IMR-90 (cell line): ENCODE measurements at regions of chr1 and their contacts with region 1.

Region 1: GRCh38 chr1:113904674-113905434 is at the starts of genes AP4B1 and DCLRE1B:
- DNase-seq: peak; percentile 100
- ATAC-seq: peak; percentile 95
- H3K4me3 ChIP-seq: peak within 1 kb of the TSS; percentile 58
- H3K27ac ChIP-seq: peak within 1 kb of the TSS; percentile 83
- H3K4me1 ChIP-seq: no peaks in the 10 kb centered on the region
- H3K27me3 ChIP-seq: no peaks in the 10 kb centered on the region
- CTCF ChIP-seq: peak; percentile 87
- POLR2A ChIP-seq: peak; percentile 86
- RAD21 ChIP-seq: peak; percentile 84
- total RNA-seq, gene AP4B1: 16.7 and 18.1 TPM in 2 replicates
- total RNA-seq, gene DCLRE1B: 6.1 TPM in 2 replicates

Region 2: DNA sequence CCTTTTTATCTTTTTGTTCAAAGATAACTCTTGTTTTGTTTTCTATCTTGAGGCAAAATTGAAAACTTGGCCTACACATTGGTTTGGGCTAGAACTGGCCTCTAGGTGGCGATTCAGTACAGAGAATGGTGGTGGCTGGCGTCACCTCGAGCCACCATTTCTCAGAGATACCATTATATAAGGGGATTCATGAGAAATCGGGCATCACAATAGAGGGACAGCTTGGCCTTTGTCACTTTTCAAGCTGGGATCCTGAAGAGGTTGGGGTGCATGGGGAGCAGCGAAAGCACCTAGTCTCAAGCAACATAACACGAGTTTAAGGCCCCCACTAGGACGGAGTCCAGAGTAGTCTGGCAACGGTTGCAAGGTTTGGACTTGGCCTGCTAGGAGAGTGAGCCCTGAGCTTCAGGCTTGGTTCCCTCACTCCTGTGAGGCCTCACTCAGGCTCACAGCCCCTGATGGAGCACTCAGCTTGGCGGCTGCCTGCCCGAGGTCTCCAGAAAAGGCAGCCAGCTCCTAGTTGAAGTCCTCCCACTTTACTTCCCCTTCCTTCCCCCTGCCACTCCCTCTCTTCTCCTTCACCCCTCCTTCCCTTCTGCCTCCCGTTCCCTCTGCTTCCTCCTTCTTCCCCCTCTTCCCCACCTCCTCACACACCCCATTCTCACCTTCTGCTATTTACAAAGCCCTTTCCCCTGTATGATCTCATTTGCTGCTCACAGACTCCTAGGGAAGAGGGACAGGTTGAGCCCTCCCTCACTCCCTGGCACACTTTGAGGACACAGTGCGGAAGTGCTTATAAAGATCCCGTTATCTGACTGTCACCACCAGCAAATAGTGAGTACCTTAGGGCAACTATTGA is 764.0 kb before region 1 on chr1:
- CTCF ChIA-PET with region 1: no interaction called
- POLR2A ChIA-PET with region 1: no interaction called
- dilution Hi-C with region 1: no loop called
- in situ Hi-C with region 1: loop called (anchors 25 kb)
- intact Hi-C with region 1: no loop called
- DNase-seq: peak; percentile 65
- ATAC-seq: peak; percentile 84
- H3K4me3 ChIP-seq: no peak overlapping the region
- H3K27ac ChIP-seq: no peak overlapping the region
- H3K4me1 ChIP-seq: peaks cover 5% of the 10 kb centered on the region
- H3K27me3 ChIP-seq: no peaks in the 10 kb centered on the region
- CTCF ChIP-seq: peak; percentile 87
- POLR2A ChIP-seq: no peak
- RAD21 ChIP-seq: peak; percentile 92

Region 3: DNA sequence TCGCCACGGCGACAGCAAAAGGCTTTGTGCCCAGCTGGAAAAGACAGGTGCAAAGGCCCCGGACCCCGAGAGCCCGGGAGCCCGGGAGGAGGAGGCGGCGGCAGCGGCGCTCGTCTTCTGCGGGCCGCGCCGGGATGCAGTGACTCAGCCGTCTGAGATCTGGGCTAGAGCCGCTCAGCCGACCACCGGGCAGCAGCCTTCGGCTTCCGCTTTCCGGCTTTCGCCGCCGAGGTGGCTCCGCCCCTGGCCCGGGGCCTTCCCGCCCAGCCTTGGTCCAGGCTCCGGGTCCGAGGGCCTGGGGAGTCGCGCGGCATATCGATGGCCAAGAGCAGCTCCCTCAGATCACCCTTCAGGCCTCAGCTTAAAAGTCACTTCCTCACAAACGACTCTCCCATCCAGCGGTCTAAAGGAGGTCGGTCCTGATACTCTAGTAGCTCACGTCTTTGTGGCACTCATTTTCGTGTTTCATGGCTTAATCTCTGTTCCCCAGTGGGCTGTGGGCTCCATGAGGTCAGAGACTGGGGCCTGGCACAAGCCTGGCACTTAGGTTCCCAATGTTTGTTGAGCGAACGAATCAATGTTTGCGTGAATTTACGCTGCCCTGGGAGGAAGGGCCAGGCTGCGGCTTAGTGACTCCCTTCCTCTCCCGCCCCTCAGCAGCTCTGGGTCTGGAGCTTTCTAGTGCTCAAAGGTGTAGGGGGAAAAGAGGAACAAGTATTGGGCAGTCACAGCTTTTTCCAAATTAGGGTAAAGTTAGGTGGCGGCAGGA is 145.3 kb before region 1 on chr1 and contains the start of gene PHTF1:
- CTCF ChIA-PET with region 1: no interaction called
- POLR2A ChIA-PET with region 1: no interaction called
- dilution Hi-C with region 1: no loop called
- in situ Hi-C with region 1: no loop called
- intact Hi-C with region 1: loop called (anchors 10 kb)
- DNase-seq: peak; percentile 81
- ATAC-seq: peak; percentile 96
- H3K4me3 ChIP-seq: peak within 1 kb of the TSS; percentile 86
- H3K27ac ChIP-seq: peak within 1 kb of the TSS; percentile 94
- H3K4me1 ChIP-seq: no peaks in the 10 kb centered on the region
- H3K27me3 ChIP-seq: no peaks in the 10 kb centered on the region
- CTCF ChIP-seq: no peak
- POLR2A ChIP-seq: peak; percentile 81; the same call in 1 of the 2 replicates
- RAD21 ChIP-seq: 0 out of 2 replicates have a peak, but pooled peaks have one; percentile 3
- total RNA-seq, gene PHTF1: 13.3 and 20.6 TPM in 2 replicates

Region 4: GRCh38 chr1:113811888-113812660 is 92.8 kb before region 1 on chr1 and contains the start of gene RSBN1:
- CTCF ChIA-PET with region 1: no interaction called
- POLR2A ChIA-PET with region 1: no interaction called
- dilution Hi-C with region 1: no loop called
- in situ Hi-C with region 1: no loop called
- intact Hi-C with region 1: loop called (anchors 1 kb)
- DNase-seq: peak; percentile 99
- ATAC-seq: peak; percentile 96
- H3K4me3 ChIP-seq: peak within 1 kb of the TSS; percentile 97
- H3K27ac ChIP-seq: peak within 1 kb of the TSS; percentile 60
- H3K4me1 ChIP-seq: peaks cover 4% of the 10 kb centered on the region
- H3K27me3 ChIP-seq: no peaks in the 10 kb centered on the region
- CTCF ChIP-seq: no peak
- POLR2A ChIP-seq: peak; percentile 95
- RAD21 ChIP-seq: no peak; the same call in 1 of the 2 replicates
- total RNA-seq, gene RSBN1: 11.7 and 12.8 TPM in 2 replicates

Region 5: DNA sequence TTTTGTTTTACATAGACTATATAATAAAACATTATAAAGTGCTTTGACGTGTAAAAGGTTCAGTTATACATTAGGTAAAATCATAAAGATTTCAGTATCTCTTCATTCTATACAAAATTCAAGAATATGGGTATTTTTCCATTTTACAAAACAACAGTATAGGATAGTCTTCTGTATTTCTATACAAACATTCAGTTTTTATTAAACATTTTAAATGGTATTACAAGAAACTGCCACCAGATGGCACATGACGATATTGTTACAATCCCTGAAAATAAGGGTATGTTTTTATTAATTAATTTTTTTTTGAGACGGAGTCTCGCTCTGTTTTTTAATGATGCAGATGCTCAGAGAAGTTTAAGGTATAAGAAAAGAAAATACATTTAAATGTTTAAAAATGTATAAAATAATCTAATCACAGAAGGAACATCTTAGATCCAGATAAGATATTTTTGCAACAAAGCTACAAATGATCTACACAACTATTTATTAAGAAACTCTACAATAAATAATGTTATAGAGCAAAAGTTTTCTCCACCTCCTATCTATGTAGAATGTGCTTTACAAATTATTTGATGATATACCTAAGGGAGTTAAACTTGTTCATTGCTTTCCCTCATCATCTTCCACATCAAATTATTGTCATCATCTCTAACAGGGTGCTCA is 69.1 kb before region 1 on chr1:
- CTCF ChIA-PET with region 1: no interaction called
- POLR2A ChIA-PET with region 1: no interaction called
- dilution Hi-C with region 1: no loop called
- in situ Hi-C with region 1: loop called (anchors 5 kb)
- intact Hi-C with region 1: loop called (anchors 1 kb)
- DNase-seq: peak; percentile 61
- ATAC-seq: peak; percentile 56
- H3K4me3 ChIP-seq: no peak overlapping the region
- H3K27ac ChIP-seq: no peak overlapping the region
- H3K4me1 ChIP-seq: no peaks in the 10 kb centered on the region
- H3K27me3 ChIP-seq: no peaks in the 10 kb centered on the region
- CTCF ChIP-seq: peak; percentile 65
- POLR2A ChIP-seq: no peak
- RAD21 ChIP-seq: peak; percentile 67

Region 6: GRCh38 chr1:113928941-113929749 is 24.3 kb after region 1 on chr1 and contains the start of gene HIPK1:
- CTCF ChIA-PET with region 1: interaction called, 3 read pairs
- POLR2A ChIA-PET with region 1: interaction called, 9 read pairs
- dilution Hi-C with region 1: no loop called
- in situ Hi-C with region 1: no loop called
- intact Hi-C with region 1: loop called (anchors 1 kb)
- DNase-seq: peak; percentile 82
- ATAC-seq: peak; percentile 90
- H3K4me3 ChIP-seq: peak within 1 kb of the TSS; percentile 96
- H3K27ac ChIP-seq: peak within 1 kb of the TSS; percentile 97
- H3K4me1 ChIP-seq: no peaks in the 10 kb centered on the region
- H3K27me3 ChIP-seq: no peaks in the 10 kb centered on the region
- CTCF ChIP-seq: no peak
- POLR2A ChIP-seq: peak; percentile 77
- RAD21 ChIP-seq: no peak
- total RNA-seq, gene HIPK1: 25.3 and 33.9 TPM in 2 replicates

Region 7: DNA sequence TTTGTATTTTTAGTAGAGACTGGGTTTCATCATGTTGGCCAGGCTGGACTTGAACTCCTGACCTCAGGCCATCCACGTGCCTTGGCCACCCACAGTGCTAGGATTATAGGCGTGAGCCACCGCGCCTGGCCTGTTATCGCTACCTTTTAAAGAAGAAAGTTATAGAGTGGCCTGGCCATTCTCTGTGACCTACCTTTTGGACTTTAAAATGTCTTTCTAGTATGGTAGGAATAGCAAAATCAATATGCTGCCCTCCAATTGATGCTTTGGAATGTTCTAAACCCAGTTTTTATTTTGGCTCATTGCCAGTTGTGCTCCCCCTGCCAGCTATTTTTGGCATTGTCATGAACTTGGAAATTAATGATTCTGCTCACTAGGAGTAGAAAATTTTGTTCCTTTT is 44.2 kb after region 1 on chr1:
- CTCF ChIA-PET with region 1: no interaction called
- POLR2A ChIA-PET with region 1: no interaction called
- dilution Hi-C with region 1: no loop called
- in situ Hi-C with region 1: no loop called
- intact Hi-C with region 1: no loop called
- DNase-seq: no peak
- ATAC-seq: no peak
- H3K4me3 ChIP-seq: no peak overlapping the region
- H3K27ac ChIP-seq: no peak overlapping the region
- H3K4me1 ChIP-seq: peaks cover 7% of the 10 kb centered on the region
- H3K27me3 ChIP-seq: no peaks in the 10 kb centered on the region
- CTCF ChIP-seq: peak; percentile 40
- POLR2A ChIP-seq: no peak
- RAD21 ChIP-seq: peak; percentile 22; the same call in 1 of the 2 replicates

Region 8: GRCh38 chr1:113963281-113963906 is 58.5 kb after region 1 on chr1:
- CTCF ChIA-PET with region 1: no interaction called
- POLR2A ChIA-PET with region 1: no interaction called
- dilution Hi-C with region 1: no loop called
- in situ Hi-C with region 1: no loop called
- intact Hi-C with region 1: loop called (anchors 5 kb)
- DNase-seq: peak; percentile 14
- ATAC-seq: peak; percentile 51
- H3K4me3 ChIP-seq: no peak overlapping the region
- H3K27ac ChIP-seq: no peak overlapping the region
- H3K4me1 ChIP-seq: no peaks in the 10 kb centered on the region
- H3K27me3 ChIP-seq: no peaks in the 10 kb centered on the region
- CTCF ChIP-seq: 0 out of 2 replicates have a peak, but pooled peaks have one; percentile 25
- POLR2A ChIP-seq: no peak
- RAD21 ChIP-seq: peak; percentile 34; the same call in 1 of the 2 replicates

Region 9: DNA sequence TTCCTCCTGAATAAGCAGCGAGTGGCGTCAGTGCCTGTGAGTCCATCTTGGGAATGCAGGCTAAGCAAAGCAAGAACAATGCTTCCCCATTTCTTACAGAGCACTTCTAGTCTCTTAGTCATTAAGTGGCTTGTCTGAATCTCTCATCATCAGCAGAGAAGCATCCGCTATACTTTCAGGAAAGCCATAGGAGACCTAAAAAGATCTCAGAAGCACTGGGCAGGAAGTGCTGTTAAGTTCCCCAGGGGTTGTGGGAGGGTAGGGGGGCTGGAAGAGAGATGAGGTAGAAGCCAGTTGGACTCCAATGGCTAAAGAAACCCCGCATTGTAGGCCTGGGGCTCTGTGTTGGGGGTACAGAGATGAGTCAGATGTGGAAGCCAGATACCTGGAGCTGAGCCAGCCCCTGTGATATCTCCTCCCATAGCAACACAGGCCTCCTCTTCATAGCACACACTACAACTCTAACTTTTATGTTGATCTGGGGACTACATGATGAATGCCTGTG is 203.9 kb after region 1 on chr1:
- CTCF ChIA-PET with region 1: no interaction called
- POLR2A ChIA-PET with region 1: no interaction called
- dilution Hi-C with region 1: no loop called
- in situ Hi-C with region 1: no loop called
- intact Hi-C with region 1: no loop called
- DNase-seq: no peak
- ATAC-seq: no peak
- H3K4me3 ChIP-seq: no peak overlapping the region
- H3K27ac ChIP-seq: no peak overlapping the region
- H3K4me1 ChIP-seq: no peaks in the 10 kb centered on the region
- H3K27me3 ChIP-seq: peaks cover 29% of the 10 kb centered on the region
- CTCF ChIP-seq: no peak
- POLR2A ChIP-seq: no peak
- RAD21 ChIP-seq: no peak